Sigmoid colon (tissue), 7 donors: ENCODE measurements at regions of chr12 and their contacts with region 1.

Region 1: DNA sequence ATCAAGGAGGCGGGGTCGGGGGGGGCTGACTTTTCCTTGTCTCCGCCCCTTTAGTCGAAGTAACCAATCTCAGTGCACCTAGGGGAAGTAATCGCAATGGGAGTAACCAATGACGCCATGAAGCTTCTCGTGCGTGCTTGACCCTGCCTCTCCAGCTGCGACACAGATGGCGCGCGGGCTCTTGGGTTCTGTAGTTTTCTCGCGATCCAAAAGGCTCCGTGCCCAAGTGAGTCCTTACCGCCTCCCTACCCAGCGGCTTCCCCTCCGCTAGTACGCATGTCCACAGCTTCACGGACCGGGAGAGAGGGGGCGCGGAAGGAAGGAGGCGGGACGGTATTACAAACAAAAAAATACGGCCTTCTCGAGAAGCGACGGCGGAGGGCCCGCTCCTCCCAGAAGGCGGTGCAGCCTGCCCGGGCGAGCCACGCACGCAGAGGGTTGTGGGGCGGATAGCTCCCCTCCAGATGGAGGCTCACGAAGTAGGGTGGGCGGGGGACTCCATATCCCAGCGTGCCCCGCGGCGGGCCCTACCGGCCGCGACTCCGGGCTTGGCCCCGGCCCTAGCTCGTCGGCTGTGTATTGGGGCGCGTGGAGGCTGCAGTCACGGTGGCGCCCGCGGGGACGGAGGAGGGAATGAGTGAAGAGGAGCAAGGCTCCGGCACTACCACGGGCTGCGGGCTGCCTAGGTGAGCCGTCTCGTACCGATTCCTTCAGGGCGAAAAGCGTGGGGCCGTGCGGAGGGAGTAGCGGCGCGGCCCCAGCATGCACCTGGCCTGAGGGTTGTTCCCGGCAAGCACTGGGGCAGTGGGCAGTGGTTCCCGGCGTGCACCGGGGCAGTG is at the start of gene TARBP2:
- DNase-seq: peak; percentile 100
- H3K4me3 ChIP-seq: peak within 1 kb of the TSS; percentile 74 to 79 (median 76)
- H3K27ac ChIP-seq: peak within 1 kb of the TSS; percentile 93 to 99 (median 98)
- H3K4me1 ChIP-seq: peaks cover 0 to 38% (median 27%) of the 10 kb centered on the region in 4 donors
- H3K27me3 ChIP-seq: no peaks in the 10 kb centered on the region
- CTCF ChIP-seq: no peak
- EP300 ChIP-seq: peak in 1 of 4 donors; percentile 67
- POLR2A ChIP-seq: peak; percentile 35 to 38
- total RNA-seq, gene TARBP2: 16.1 to 29.9 (median 19.4) TPM

Region 2: DNA sequence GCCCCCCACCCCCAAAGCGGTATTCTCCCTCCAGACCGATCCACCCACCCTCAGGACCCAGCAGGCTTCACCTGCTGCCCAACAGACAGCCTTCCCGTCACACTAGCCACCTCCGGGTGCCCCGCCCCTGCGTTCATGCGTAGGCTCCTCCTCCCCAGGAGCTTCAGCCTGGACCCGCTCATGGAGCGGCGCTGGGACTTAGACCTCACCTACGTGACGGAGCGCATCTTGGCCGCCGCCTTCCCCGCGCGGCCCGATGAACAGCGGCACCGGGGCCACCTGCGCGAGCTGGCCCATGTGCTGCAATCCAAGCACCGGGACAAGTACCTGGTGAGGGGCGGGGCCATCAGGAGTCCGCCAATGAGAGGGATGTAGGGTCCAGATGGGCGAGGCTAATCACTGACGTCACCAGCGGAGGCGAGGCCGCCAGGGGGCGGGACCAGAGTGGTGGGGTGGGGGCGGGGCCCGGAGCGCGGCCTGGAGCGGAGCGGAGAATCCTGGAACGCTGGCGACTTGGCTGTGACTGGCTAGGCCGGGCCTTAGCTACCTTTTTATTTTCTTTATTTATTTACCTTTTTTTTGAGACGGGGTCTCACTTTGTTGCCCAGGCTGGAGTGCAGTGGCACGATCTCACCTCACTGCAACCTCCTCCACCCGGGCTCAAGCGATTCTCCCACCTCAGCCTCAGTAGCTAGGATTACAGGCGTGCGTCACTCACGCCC is 446.7 kb before region 1 on chr12:
- intact Hi-C with region 1: loop called (anchors 5 kb)
- DNase-seq: peak; percentile 98
- H3K4me3 ChIP-seq: peak overlapping the region; percentile 45 to 74 (median 61)
- H3K27ac ChIP-seq: peak overlapping the region; percentile 97 to 100 (median 98)
- H3K4me1 ChIP-seq: peaks cover 0 to 66% (median 60%) of the 10 kb centered on the region in 4 donors
- H3K27me3 ChIP-seq: no peaks in the 10 kb centered on the region
- CTCF ChIP-seq: no peak
- EP300 ChIP-seq: no peak
- POLR2A ChIP-seq: peak in 1 of 2 donors; percentile 44

Region 3: DNA sequence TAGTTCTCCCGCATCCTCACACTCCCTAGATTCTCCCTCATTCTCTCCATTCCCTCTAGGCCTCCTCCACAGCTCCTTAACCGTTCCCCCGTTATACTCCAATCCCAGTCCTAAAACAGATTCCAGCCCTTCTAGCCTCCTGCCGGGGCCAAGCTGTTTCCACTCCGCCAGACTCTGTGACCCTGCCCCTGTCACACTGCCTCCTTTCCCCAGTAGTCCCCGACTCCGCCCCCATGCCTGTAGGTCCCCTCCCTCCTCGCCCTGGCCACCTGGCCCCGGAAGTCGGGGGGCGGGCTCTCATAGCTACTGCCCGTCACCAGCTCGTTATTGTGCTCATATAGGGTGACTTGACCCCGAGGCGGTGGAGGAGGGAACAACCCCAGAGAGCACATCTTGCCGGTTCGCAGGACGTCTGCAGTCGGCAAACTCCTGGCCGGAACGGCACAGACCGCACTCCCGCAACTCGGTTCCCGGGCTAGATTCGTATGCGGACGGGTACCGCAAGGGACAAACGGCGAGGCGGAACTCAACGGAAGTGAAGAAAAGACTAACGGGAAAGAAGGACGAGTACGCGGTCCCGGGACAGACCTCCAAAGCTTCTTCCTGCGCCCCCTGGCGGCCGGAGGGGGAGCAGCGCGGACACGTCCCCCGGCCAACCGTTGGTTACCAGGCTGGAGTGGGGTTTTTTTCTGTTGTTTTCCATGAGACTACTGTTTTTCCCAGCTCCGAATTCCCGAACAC is 179.8 kb before region 1 on chr12 and contains the start of gene AAAS:
- intact Hi-C with region 1: loop called (anchors 5 kb)
- DNase-seq: peak; percentile 98
- H3K4me3 ChIP-seq: peak within 1 kb of the TSS; percentile 62 to 71 (median 66)
- H3K27ac ChIP-seq: peak within 1 kb of the TSS; percentile 83 to 95 (median 90)
- H3K4me1 ChIP-seq: peaks cover 0 to 47% (median 36%) of the 10 kb centered on the region in 4 donors
- H3K27me3 ChIP-seq: no peaks in the 10 kb centered on the region
- CTCF ChIP-seq: peak; percentile 96 to 99 (median 98)
- EP300 ChIP-seq: no peak
- POLR2A ChIP-seq: no peak
- total RNA-seq, gene AAAS: 38.2 to 62.0 (median 47.4) TPM

Region 4: DNA sequence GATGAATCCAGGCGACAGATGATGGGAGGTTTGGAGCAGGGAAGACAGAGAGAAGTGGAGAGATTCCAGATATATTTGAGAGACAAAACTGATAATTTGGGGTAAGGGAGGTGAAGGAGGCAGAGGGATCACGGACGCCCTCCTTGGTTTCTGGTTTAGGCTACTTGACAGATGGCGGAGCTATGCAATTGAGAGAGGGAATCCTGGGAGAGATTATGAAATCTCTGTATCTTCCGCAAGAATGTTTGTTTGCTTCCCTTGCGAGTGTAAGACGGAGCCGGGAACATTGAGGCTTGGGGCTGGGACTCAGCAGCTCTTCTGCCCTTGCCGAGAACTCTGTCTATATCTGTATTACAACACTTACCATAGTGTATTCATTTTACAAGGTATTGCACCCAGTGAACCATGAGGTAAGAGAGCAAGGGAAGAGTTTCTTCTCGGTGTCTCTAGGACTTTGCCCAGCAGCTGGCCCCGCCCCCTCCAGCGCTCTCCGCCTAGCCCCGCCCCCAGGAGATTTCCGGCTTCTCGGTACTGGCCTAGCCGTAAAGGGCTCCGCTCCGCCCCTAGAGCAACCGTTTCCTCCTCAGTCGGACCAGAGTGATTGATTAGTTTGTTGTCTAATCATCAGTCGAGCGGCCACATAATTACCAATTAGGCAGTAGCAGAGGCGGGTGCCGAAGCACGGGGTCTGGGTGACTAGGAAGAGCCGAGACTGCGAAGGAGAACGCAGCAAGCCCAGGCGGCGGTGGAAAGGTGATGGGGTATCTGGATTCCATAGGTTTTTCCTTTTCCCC is 59.8 kb before region 1 on chr12 and contains the start of gene PRR13:
- intact Hi-C with region 1: loop called (anchors 2 kb)
- DNase-seq: peak; percentile 100
- H3K4me3 ChIP-seq: peak within 1 kb of the TSS; percentile 57 to 77 (median 74)
- H3K27ac ChIP-seq: peak within 1 kb of the TSS; percentile 79 to 96 (median 92)
- H3K4me1 ChIP-seq: peaks cover 2 to 30% (median 19%) of the 10 kb centered on the region in 4 donors
- H3K27me3 ChIP-seq: no peaks in the 10 kb centered on the region
- CTCF ChIP-seq: no peak
- EP300 ChIP-seq: no peak
- POLR2A ChIP-seq: peak; percentile 97 to 98
- total RNA-seq, gene PRR13: 46.7 to 68.1 (median 55.1) TPM